ENCODE measurements at regions of chr3 and their contacts with region 1.

Region 1: DNA sequence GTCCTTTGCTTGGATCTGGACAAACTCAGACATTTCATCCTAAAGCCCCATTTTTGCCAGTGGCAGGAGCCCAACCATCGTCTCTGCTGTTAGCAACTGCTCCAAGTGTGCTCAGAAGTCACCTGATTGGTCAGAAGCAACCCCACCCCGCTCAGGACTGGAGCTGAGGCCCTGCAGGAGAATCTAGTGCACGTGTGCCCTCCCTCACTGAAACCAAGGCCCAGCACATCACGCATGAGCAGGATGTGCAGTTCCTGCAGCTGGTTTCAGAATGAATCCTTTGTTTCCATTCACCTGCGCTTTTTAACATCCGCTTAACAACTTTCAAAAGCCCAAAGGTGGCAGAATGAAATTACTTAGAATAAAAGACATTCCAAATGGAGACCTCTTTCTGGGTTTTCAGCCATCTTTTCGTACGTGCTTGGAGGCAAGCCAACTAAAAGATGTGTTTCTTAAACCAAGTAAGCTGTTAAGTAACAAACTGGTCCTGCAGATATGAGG is 81.2 kb downstream of the SRGAP3 start:
- DNase-seq: peak; percentile 63
- H3K4me3 Mint-ChIP-seq: peak overlapping the region; percentile 30
- H3K27ac Mint-ChIP-seq: peak overlapping the region; percentile 51
- H3K4me1 Mint-ChIP-seq: peaks cover 3% of the 10 kb centered on the region
- H3K27me3 Mint-ChIP-seq: peaks cover 7% of the 10 kb centered on the region

Region 2: GRCh38 chr3:8560366-8561007 is 607.8 kb before region 1 on chr3:
- intact Hi-C with region 1: no loop called
- DNase-seq: no peak
- H3K4me3 Mint-ChIP-seq: no peak overlapping the region
- H3K27ac Mint-ChIP-seq: no peak overlapping the region
- H3K4me1 Mint-ChIP-seq: no peaks in the 10 kb centered on the region
- H3K27me3 Mint-ChIP-seq: no peaks in the 10 kb centered on the region

Region 3: DNA sequence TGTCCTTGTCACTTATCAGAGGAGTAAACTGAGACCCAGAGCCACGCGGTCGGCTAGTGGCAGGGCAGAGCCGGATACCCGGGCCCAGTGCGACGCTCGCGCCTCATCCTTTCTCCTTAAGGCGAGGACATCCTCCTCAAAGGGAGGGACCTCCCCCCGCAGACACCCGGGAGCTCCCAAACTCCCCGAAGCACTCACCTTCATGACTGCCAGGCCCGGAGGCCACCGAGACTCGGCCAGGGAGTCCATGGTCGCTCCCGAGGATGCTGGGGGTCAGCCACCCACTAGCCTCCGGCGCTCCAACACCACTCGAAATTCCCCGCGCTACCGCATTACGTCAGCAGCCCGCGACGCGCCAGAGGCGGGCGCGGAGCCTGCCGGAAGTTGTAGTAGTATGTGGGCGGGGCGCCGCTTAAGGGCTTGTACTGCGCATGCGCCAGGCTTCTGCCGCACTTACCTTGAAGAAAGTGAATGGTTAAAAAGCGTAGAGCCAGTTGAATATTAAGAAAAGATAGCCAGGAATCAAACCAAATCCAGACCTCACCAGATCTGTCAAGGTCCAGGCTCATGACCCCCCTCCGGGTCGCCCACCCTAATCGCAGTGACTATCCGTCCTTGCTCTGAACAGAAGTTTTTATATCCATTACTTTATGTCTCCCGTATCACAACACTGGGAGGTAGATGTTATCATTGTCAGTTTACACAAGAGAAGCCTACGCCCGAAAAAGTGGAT is 205.0 kb before region 1 on chr3 and contains the start of gene RAD18:
- intact Hi-C with region 1: loop called (anchors 5 kb)
- DNase-seq: peak; percentile 91
- H3K4me3 Mint-ChIP-seq: peak within 1 kb of the TSS; percentile 98
- H3K27ac Mint-ChIP-seq: peak within 1 kb of the TSS; percentile 97
- H3K4me1 Mint-ChIP-seq: peaks cover 62% of the 10 kb centered on the region
- H3K27me3 Mint-ChIP-seq: peaks cover 7% of the 10 kb centered on the region
- total RNA-seq, gene RAD18: 52.8 and 54.2 TPM in 2 replicates

Region 4: GRCh38 chr3:9179826-9180763 is 11.8 kb after region 1 on chr3:
- intact Hi-C with region 1: loop called (anchors 1 kb)
- DNase-seq: no peak
- H3K4me3 Mint-ChIP-seq: peak overlapping the region; percentile 73
- H3K27ac Mint-ChIP-seq: peak overlapping the region; percentile 74
- H3K4me1 Mint-ChIP-seq: peaks cover 46% of the 10 kb centered on the region
- H3K27me3 Mint-ChIP-seq: peaks cover 14% of the 10 kb centered on the region

Region 5: GRCh38 chr3:9224490-9224889 is 56.2 kb after region 1 on chr3:
- intact Hi-C with region 1: loop called (anchors 1 kb)
- DNase-seq: peak; percentile 2
- H3K4me3 Mint-ChIP-seq: no peak overlapping the region
- H3K27ac Mint-ChIP-seq: no peak overlapping the region
- H3K4me1 Mint-ChIP-seq: peaks cover 32% of the 10 kb centered on the region
- H3K27me3 Mint-ChIP-seq: peaks cover 14% of the 10 kb centered on the region

Region 6: DNA sequence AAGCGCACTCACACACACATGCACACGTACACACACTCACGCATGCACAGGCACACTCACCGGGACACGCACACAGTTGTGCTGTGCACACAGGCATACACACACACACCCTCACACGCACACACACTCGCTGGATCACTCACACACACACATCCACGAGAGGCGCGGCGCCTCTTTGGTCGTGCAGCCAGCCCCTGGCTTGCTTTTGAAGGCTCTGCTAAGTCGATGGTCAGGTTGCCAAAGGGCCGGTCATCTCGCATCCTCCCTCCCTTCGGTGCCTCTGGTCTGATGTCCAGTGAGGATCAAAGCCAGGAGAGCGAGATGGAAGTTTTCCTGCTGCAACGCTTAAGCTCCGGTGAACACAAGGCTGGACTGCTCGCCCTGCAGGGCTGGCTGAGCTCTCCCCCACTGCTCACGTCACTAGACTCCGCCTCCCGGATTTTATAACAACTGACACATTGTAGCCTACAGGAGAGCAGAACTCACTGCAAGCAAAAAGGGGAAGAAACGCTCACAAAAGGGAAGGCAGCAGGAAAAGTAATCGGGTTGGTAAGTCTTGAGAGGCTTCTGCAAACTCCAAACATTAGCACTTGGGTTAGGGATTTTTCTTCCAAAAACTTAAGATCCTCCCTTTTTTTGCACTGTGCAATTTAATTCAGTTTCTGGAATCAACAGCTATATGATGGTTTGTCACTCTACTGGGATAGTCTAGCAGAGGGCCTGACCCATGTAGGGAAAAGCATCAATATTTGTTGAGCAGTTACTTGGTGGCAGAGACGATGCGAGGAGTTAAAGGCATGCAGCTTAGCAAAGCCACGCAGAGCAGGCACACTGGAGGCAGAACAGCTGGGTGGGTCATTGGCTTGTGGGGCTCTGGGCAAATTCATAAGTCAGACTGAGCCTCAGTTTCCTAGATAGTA is 81.2 kb after region 1 on chr3 and contains the start of gene SRGAP3:
- intact Hi-C with region 1: loop called (anchors 1 kb)
- DNase-seq: peak; percentile 74
- H3K4me3 Mint-ChIP-seq: peak within 1 kb of the TSS; percentile 81
- H3K27ac Mint-ChIP-seq: no peak within 1 kb of the TSS
- H3K4me1 Mint-ChIP-seq: peaks cover 22% of the 10 kb centered on the region
- H3K27me3 Mint-ChIP-seq: peaks cover 23% of the 10 kb centered on the region
- total RNA-seq, gene SRGAP3: 0.54 and 0.61 TPM in 2 replicates

Measured in activated T-helper 1 cell treated with anti-CD3 and anti-CD28 coated beads, Interleukin-12 subunit alpha, Interleukin-12 subunit beta, Interleukin-2, Interleukin-4 antibody, amounts not matched to agents 30 ng/mL and 10 ng/mL and 1 ng/mL, durations not matched to agents 14 hours and 24 hours and 36 hours (primary cell).